H1 (cell line): ENCODE measurements at regions of chr2 and their contacts with region 1.

Region 1: GRCh38 chr2:71299507-71299906 is 32.1 kb upstream of the ZNF638 start:
- DNase-seq: no peak
- H3K4me3 ChIP-seq: no peak overlapping the region
- H3K27ac ChIP-seq: no peak overlapping the region
- H3K4me1 ChIP-seq: no peaks in the 10 kb centered on the region
- H3K27me3 ChIP-seq: no peaks in the 10 kb centered on the region
- CTCF ChIP-seq: peak in 2 of 3 experiments; percentile 27 to 61; a peak in 2 of 4 replicates
- EP300 ChIP-seq: no peak
- POLR2A ChIP-seq: no peak
- RAD21 ChIP-seq: peak; percentile 61 to 66

Region 2: GRCh38 chr2:71117063-71117462 is 182.4 kb before region 1 on chr2:
- CTCF ChIA-PET with region 1: no interaction called
- POLR2A ChIA-PET with region 1: no interaction called
- DNase-seq: no peak
- H3K4me3 ChIP-seq: no peak overlapping the region
- H3K27ac ChIP-seq: no peak overlapping the region
- H3K4me1 ChIP-seq: no peaks in the 10 kb centered on the region; a peak in 1 of 7 replicates
- H3K27me3 ChIP-seq: no peaks in the 10 kb centered on the region
- CTCF ChIP-seq: no peak
- EP300 ChIP-seq: no peak
- POLR2A ChIP-seq: no peak
- RAD21 ChIP-seq: no peak

Region 3: DNA sequence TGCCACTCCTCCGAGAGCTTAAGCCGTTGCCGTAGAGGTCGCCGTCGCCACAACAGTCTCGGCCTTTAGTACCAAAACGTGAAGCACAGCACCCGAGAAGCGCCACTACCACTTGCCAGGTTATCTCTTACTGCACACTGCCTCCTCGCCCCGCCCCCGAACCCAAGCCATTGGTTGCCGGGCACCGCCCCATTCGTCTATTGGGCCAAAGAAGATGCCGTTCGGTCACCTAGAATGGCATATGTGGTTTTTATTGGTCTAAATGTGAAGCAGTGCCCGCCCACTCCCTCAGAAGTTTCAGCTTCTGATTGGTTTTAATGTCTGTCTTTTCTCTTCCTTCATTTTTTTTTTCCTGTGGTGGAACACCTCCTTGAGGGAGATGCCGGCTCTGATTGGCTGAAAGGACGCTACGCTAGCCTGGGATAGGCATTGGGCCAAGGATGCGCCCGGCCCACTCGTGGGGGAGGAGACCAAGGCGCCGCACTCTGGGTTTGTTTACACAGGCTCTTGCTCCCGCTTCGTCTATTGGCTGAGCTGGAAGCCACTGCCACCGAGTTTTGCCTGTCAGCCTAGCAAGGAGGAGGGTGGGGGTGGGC is 72.4 kb before region 1 on chr2 and contains the start of gene PAIP2B:
- CTCF ChIA-PET with region 1: interaction called, 22 read pairs
- POLR2A ChIA-PET with region 1: no interaction called
- DNase-seq: peak; percentile 96 to 99
- H3K4me3 ChIP-seq: peak within 1 kb of the TSS; percentile 79 to 93 (median 80)
- H3K27ac ChIP-seq: peak within 1 kb of the TSS; percentile 60; the same call in 1 of the 2 replicates
- H3K4me1 ChIP-seq: peaks cover 0 to 4% (median 0%) of the 10 kb centered on the region in 4 experiments; a peak in 3 of 7 replicates
- H3K27me3 ChIP-seq: no peaks in the 10 kb centered on the region
- CTCF ChIP-seq: no peak
- EP300 ChIP-seq: peak in 1 of 2 experiments; percentile 25; a peak in 1 of 3 replicates
- POLR2A ChIP-seq: peak; percentile 66 to 75; a peak in 2 of 3 replicates
- RAD21 ChIP-seq: no peak
- total RNA-seq, gene PAIP2B: 30.4 and 31.3 TPM in 2 replicates

Region 4: DNA sequence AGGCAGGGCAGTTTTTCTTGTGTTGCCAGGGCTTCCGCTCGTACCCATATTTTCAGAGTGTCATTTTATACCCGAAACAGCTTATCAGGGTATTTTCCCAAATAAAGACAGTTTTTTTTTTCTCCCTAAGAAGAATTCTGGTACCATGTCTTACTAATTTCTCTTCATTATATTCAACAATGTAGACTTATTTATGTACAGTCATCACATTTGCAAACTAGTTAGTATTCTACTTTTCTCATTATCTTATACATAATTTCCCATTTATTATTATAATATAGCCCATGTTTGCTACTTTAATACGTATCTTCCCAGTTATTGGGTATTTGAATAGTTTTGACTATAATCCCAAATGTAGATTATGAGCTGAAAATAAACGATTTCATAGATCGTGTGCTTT is 36.1 kb before region 1 on chr2:
- CTCF ChIA-PET with region 1: no interaction called
- POLR2A ChIA-PET with region 1: no interaction called
- DNase-seq: no peak
- H3K4me3 ChIP-seq: no peak overlapping the region
- H3K27ac ChIP-seq: no peak overlapping the region
- H3K4me1 ChIP-seq: no peaks in the 10 kb centered on the region
- H3K27me3 ChIP-seq: no peaks in the 10 kb centered on the region
- CTCF ChIP-seq: no peak
- EP300 ChIP-seq: no peak
- POLR2A ChIP-seq: no peak
- RAD21 ChIP-seq: no peak

Region 5: GRCh38 chr2:71282495-71282894 is 17.0 kb before region 1 on chr2:
- CTCF ChIA-PET with region 1: interaction called, 14 read pairs
- POLR2A ChIA-PET with region 1: interaction called, 3 read pairs
- DNase-seq: no peak
- H3K4me3 ChIP-seq: no peak overlapping the region
- H3K27ac ChIP-seq: no peak overlapping the region
- H3K4me1 ChIP-seq: peaks cover 3 to 14% (median 6%) of the 10 kb centered on the region in 4 experiments; a peak in 6 of 7 replicates
- H3K27me3 ChIP-seq: no peaks in the 10 kb centered on the region
- CTCF ChIP-seq: peak in 2 of 3 experiments; percentile 34 to 37; a peak in 3 of 4 replicates
- EP300 ChIP-seq: no peak
- POLR2A ChIP-seq: no peak
- RAD21 ChIP-seq: peak; percentile 37 to 53; a peak in 3 of 4 replicates

Region 6: GRCh38 chr2:71331581-71332434 is 32.3 kb after region 1 on chr2 and contains the start of gene ZNF638:
- CTCF ChIA-PET with region 1: interaction called, 29 read pairs
- POLR2A ChIA-PET with region 1: interaction called, 4 read pairs
- DNase-seq: peak; percentile 72 to 91
- H3K4me3 ChIP-seq: peak within 1 kb of the TSS; percentile 69 to 94 (median 90)
- H3K27ac ChIP-seq: peak within 1 kb of the TSS; percentile 98
- H3K4me1 ChIP-seq: peaks cover 4 to 6% (median 4%) of the 10 kb centered on the region in 4 experiments; a peak in 4 of 7 replicates
- H3K27me3 ChIP-seq: no peaks in the 10 kb centered on the region
- CTCF ChIP-seq: peak; percentile 30 to 71 (median 62)
- EP300 ChIP-seq: no peak; a peak in 1 of 3 replicates
- POLR2A ChIP-seq: peak; percentile 77 to 95; a peak in 2 of 3 replicates
- RAD21 ChIP-seq: peak; percentile 20 to 45; a peak in 2 of 4 replicates
- total RNA-seq, gene ZNF638: 143 and 144 TPM in 2 replicates

Region 7: DNA sequence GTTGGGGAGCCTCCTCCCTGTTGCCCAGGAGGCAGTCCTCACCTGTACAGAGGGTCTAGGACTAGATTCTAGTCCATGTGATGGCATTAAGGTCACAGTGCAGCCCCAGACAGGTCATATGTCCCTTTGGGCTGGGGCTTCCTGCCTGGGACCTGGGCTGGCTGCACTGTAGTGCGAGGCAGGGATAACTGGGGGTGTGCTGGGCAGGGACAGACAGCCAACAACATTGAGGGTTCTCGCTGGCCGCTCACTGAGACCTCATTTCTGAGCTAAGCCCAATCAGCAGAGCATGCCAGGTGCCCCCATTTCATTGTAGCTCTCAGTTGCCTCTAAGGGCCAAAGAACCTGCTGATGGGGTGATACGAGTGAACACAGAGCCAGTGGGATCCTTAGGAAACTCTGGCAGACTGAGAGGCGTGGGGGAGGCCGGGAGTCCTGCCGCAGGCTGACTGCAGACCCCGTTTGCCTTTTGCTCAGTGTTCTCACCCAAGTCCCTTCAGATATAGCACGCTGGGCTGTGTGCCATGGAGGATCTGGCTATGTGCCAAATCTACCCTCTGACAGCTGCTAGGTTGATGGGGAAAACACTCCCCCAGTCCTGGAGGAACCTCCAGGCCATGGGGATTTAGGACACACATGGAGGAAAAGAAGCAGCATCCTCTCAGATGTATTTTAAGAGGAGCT is 205.7 kb after region 1 on chr2:
- CTCF ChIA-PET with region 1: interaction called, 26 read pairs
- POLR2A ChIA-PET with region 1: no interaction called
- DNase-seq: no peak
- H3K4me3 ChIP-seq: no peak overlapping the region
- H3K27ac ChIP-seq: no peak overlapping the region
- H3K4me1 ChIP-seq: peaks cover 0 to 5% (median 0%) of the 10 kb centered on the region in 4 experiments; a peak in 2 of 7 replicates
- H3K27me3 ChIP-seq: no peaks in the 10 kb centered on the region
- CTCF ChIP-seq: no peak
- EP300 ChIP-seq: no peak
- POLR2A ChIP-seq: no peak
- RAD21 ChIP-seq: no peak